GM12878 (cell line): ENCODE measurements at regions of chr1 and their contacts with region 1.

Region 1: DNA sequence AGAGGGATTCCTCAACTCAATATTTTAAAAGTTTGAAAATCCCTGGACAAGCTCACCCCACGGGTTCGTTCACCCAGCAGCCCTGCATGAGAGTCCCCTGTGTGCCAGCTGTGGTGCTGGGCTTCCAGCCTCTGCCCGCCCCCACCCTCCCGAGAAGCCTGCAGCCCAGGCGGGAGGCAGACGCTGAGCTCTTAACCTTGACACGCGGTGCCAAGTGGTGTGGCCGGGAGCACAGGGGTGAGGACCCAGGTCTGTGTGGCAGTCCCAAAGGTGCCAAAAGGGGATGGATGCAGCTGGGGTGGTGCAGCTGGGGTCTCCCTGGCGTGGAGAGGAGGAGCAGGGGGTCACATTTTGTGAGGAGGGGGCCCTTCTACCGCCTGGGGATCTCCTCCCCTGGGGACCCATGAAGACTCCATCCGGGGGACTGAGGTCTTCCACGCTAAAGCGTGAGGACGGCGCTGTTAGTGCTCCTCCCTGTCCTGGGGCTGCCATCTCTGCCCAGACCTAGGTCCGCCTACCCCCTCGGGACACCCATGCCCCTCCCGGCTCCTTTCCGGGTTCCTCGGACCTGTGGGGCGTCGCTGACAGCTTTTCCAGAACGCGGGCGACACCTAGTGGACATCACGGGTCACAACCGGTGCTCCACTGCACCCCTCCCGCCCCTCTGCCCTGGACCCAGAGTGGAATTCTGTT is 12.9 kb downstream of the PLA2G2F start:
- DNase-seq: no peak
- ATAC-seq: peak; percentile 97
- H3K4me3 ChIP-seq: peak overlapping the region; percentile 43; the same call in 1 of the 2 replicates
- H3K27ac ChIP-seq: no peak overlapping the region
- H3K4me1 ChIP-seq: peaks cover 9% of the 10 kb centered on the region
- H3K27me3 ChIP-seq: no peaks in the 10 kb centered on the region
- CTCF ChIP-seq: peak; percentile 83 to 97 (median 91); a peak in 5 of 6 replicates
- EP300 ChIP-seq: no peak
- POLR2A ChIP-seq: no peak
- RAD21 ChIP-seq: peak; percentile 96

Region 2: DNA sequence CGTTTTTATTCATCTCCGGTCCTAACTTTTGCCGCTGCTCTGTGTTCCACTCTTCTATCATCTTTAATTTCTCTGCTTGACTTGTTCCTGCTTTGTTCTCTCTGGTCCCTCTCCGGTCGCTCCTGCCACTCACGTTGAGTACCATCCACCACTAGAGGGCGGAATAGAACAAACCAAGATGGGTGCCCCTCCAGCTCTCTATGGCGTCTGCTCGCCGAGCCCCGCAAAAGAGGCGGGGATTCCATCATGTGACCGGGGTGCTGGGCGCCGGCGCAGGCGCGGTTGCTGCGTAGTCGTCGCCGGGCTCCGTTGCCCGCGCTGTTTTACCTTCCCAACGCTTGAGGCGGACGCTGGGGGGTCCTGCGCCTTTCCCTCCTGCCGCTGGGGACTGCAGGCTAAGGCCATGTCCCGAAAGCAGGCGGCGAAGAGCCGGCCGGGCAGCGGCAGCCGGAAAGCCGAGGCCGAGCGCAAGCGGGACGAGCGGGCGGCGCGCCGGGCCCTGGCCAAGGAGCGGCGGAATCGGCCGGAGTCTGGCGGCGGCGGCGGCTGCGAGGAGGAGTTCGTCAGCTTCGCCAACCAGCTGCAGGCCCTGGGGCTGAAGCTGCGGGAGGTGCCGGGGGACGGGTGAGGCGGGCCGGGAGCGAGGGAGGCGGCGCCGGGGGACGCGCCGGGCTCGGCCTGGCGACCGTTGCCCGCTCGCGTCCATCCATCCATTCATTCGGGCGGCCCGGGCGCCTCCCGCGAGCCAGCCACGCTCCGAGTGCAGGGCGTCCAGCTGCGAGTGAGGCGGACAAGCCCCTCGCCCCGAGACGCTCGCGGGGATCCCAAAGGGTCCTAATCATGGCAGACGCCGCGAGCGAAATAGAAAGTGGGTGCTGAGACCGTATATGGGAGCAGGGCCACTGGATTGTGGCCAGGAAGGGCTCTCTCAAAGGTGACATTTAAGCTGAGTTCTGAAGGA is 269.7 kb before region 1 on chr1 and contains the start of gene OTUD3:
- CTCF ChIA-PET with region 1: interaction called, 9 read pairs
- POLR2A ChIA-PET with region 1: no interaction called
- RAD21 ChIA-PET with region 1: interaction called, 8 read pairs
- SMC1A ChIA-PET with region 1: interaction called, 5 read pairs
- in situ Hi-C with region 1: no loop called
- intact Hi-C with region 1: loop called (anchors 1 kb)
- DNase-seq: peak; percentile 84
- ATAC-seq: peak; percentile 95
- H3K4me3 ChIP-seq: peak within 1 kb of the TSS; percentile 96
- H3K27ac ChIP-seq: peak within 1 kb of the TSS; percentile 81
- H3K4me1 ChIP-seq: no peaks in the 10 kb centered on the region; the same call in 1 of the 2 replicates
- H3K27me3 ChIP-seq: no peaks in the 10 kb centered on the region; a peak in 1 of 4 replicates
- CTCF ChIP-seq: peak; percentile 88 to 95 (median 94); a peak in 5 of 6 replicates
- EP300 ChIP-seq: no peak
- POLR2A ChIP-seq: peak; percentile 92
- RAD21 ChIP-seq: peak; percentile 56
- polyA plus RNA-seq, gene OTUD3: 0.77 to 1.00 TPM

Region 3: DNA sequence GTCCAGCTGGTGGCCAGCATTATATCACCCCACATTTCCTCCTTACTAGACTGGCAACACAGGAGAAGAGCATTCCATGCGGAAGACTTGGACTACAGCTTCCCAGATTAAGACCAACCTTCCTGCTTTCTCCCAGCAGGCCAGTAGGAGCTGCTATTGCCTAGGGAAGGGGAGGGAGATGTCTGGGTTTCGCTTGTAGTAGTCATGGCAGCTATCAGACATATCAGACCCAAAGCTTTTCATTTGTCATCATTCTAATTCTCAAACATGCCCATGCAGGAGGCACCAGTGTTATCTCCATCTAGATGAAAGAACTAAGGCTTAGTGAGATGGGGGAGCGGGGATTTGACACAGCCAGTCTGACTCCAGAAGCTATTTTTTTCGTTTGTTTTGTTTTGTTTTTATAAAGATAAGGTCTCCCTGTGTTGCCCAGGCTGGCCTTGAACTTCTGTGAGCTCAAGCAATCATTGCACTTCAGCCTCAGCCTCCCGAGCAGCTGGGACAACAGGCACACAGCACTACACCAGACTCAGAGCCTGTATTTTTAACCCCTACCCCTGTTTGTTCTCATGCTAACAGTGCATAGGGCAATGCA is 177.1 kb before region 1 on chr1:
- CTCF ChIA-PET with region 1: interaction called, 9 read pairs
- POLR2A ChIA-PET with region 1: interaction called, 4 read pairs
- RAD21 ChIA-PET with region 1: interaction called, 10 read pairs
- SMC1A ChIA-PET with region 1: interaction called, 11 read pairs
- in situ Hi-C with region 1: no loop called
- intact Hi-C with region 1: loop called (anchors 1 kb)
- DNase-seq: no peak
- ATAC-seq: no peak
- H3K4me3 ChIP-seq: no peak overlapping the region
- H3K27ac ChIP-seq: no peak overlapping the region
- H3K4me1 ChIP-seq: no peaks in the 10 kb centered on the region
- H3K27me3 ChIP-seq: no peaks in the 10 kb centered on the region; a peak in 1 of 4 replicates
- CTCF ChIP-seq: peak; percentile 71 to 77 (median 73)
- EP300 ChIP-seq: no peak
- POLR2A ChIP-seq: no peak
- RAD21 ChIP-seq: peak; percentile 92

Region 4: GRCh38 chr1:20100632-20101355 is 51.3 kb before region 1 on chr1:
- CTCF ChIA-PET with region 1: interaction called, 181 read pairs
- POLR2A ChIA-PET with region 1: interaction called, 3 read pairs
- RAD21 ChIA-PET with region 1: interaction called, 91 read pairs
- SMC1A ChIA-PET with region 1: interaction called, 35 read pairs
- in situ Hi-C with region 1: no loop called
- intact Hi-C with region 1: loop called (anchors 1 kb)
- DNase-seq: no peak
- ATAC-seq: peak; percentile 97
- H3K4me3 ChIP-seq: no peak overlapping the region
- H3K27ac ChIP-seq: no peak overlapping the region
- H3K4me1 ChIP-seq: no peaks in the 10 kb centered on the region
- H3K27me3 ChIP-seq: no peaks in the 10 kb centered on the region
- CTCF ChIP-seq: peak; percentile 84 to 90 (median 86)
- EP300 ChIP-seq: no peak
- POLR2A ChIP-seq: no peak
- RAD21 ChIP-seq: peak; percentile 94

Region 5: DNA sequence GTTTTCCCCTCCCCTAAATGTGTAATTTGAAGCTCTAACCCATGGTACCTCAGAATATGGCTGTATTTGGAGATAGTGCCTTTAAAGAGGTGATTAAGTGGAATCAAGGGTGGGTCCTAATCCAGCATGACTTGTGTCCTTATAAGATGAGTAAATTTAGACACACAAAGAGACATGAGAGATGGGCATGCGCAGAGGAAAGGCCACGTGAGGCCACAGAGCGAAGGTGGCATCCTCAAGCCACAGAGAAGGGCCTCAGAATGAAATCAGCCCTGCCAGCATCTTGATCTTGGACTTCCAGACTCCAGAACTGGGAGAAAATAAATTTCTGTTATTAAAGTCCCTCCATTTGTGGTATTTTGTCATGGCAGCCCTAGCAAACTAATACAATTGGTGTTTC is 15.8 kb before region 1 on chr1:
- CTCF ChIA-PET with region 1: no interaction called
- POLR2A ChIA-PET with region 1: no interaction called
- RAD21 ChIA-PET with region 1: no interaction called
- SMC1A ChIA-PET with region 1: no interaction called
- in situ Hi-C with region 1: no loop called
- intact Hi-C with region 1: no loop called
- DNase-seq: no peak
- ATAC-seq: no peak
- H3K4me3 ChIP-seq: no peak overlapping the region
- H3K27ac ChIP-seq: no peak overlapping the region
- H3K4me1 ChIP-seq: no peaks in the 10 kb centered on the region
- H3K27me3 ChIP-seq: no peaks in the 10 kb centered on the region
- CTCF ChIP-seq: no peak
- EP300 ChIP-seq: no peak
- POLR2A ChIP-seq: no peak
- RAD21 ChIP-seq: no peak

Region 6: DNA sequence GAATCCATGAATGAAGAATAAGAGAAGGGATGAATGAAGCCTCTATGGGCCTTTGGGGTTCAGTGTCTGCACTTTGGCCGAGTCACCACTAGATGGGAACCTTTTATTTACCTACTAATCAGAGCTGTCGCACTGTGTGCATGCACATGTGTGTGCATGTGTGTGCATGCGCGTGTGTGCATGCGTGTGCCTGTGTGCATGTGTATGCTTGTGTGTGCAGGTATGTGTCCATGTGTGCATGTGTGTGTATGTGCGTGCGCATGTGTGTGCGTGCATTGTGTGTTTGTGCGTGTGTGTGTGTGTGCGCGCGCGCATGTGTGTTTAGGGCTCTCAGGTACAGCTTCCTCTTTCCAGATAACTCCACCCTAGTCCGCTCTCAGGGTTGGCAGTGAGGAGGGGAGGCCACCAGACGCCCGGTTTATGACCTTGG is 13.5 kb after region 1 on chr1:
- CTCF ChIA-PET with region 1: interaction called, 12 read pairs
- POLR2A ChIA-PET with region 1: no interaction called
- RAD21 ChIA-PET with region 1: no interaction called
- SMC1A ChIA-PET with region 1: no interaction called
- in situ Hi-C with region 1: no loop called
- intact Hi-C with region 1: no loop called
- DNase-seq: no peak
- ATAC-seq: peak; percentile 72
- H3K4me3 ChIP-seq: no peak overlapping the region
- H3K27ac ChIP-seq: no peak overlapping the region
- H3K4me1 ChIP-seq: no peaks in the 10 kb centered on the region
- H3K27me3 ChIP-seq: no peaks in the 10 kb centered on the region; a peak in 2 of 4 replicates
- CTCF ChIP-seq: peak; percentile 27 to 55 (median 46); a peak in 3 of 6 replicates
- EP300 ChIP-seq: no peak
- POLR2A ChIP-seq: no peak
- RAD21 ChIP-seq: peak; percentile 34; the same call in 1 of the 2 replicates

Region 7: GRCh38 chr1:20194757-20195461 is 42.9 kb after region 1 on chr1:
- CTCF ChIA-PET with region 1: interaction called, 42 read pairs
- POLR2A ChIA-PET with region 1: no interaction called
- RAD21 ChIA-PET with region 1: interaction called, 10 read pairs
- SMC1A ChIA-PET with region 1: interaction called, 7 read pairs
- in situ Hi-C with region 1: no loop called
- intact Hi-C with region 1: loop called (anchors 5 kb)
- DNase-seq: peak; percentile 13
- ATAC-seq: peak; percentile 91
- H3K4me3 ChIP-seq: no peak overlapping the region
- H3K27ac ChIP-seq: no peak overlapping the region
- H3K4me1 ChIP-seq: no peaks in the 10 kb centered on the region
- H3K27me3 ChIP-seq: peaks cover 0 to 5% of the 10 kb centered on the region in 2 experiments; a peak in 2 of 4 replicates
- CTCF ChIP-seq: peak; percentile 80 to 98 (median 93)
- EP300 ChIP-seq: no peak
- POLR2A ChIP-seq: no peak
- RAD21 ChIP-seq: peak; percentile 78

Region 8: GRCh38 chr1:20255666-20256065 is 103.6 kb after region 1 on chr1:
- CTCF ChIA-PET with region 1: no interaction called
- POLR2A ChIA-PET with region 1: no interaction called
- RAD21 ChIA-PET with region 1: no interaction called
- SMC1A ChIA-PET with region 1: no interaction called
- in situ Hi-C with region 1: no loop called
- intact Hi-C with region 1: no loop called
- DNase-seq: no peak
- ATAC-seq: peak; percentile 28; the same call in 1 of the 3 replicates
- H3K4me3 ChIP-seq: no peak overlapping the region
- H3K27ac ChIP-seq: no peak overlapping the region
- H3K4me1 ChIP-seq: no peaks in the 10 kb centered on the region
- H3K27me3 ChIP-seq: no peaks in the 10 kb centered on the region
- CTCF ChIP-seq: no peak
- EP300 ChIP-seq: no peak
- POLR2A ChIP-seq: no peak
- RAD21 ChIP-seq: no peak